ENCODE measurements at regions of chr2 and their contacts with region 1.

Region 1: DNA sequence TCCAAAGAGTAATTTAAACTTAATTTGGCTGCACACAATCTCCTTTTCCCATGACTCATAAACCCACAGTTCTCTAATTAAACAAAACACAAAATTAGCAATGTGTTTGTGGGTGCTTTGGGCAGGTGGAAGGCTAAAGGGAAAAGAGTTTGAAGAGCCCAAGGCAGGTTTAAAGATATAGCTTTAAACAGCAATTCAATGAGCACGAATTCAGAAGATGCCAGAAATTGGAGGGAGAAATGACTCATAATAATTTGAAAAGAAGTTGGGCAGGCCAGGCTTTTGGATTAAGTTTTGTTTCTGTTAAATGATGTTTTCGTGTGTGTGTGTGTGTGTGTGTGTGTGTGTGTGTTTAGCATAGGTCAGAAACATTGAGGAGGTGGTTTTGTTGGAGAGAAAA is 594.8 kb upstream of the ZEB2 start:
- DNase-seq: no peak
- H3K4me3 ChIP-seq: no peak overlapping the region
- CTCF ChIP-seq: no peak
- POLR2A ChIP-seq: no peak

Region 2: DNA sequence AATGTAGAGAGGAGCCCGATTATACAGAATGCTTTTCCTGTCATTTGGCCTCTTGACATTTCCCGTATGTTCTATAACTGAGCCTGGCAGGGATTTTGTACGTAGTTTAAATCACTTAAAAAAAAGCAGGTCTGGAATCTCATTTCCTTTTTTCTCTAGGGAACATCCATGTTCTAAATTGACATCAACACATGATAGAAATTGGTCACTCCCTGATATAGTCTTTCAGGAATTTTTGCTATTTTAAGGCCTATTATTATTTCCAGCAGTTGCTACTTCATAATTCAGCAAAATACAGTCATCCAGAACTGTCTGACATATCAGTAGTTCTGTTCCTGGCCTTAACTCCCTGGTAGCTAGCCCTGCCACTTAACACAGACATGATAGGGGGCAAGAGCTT is 29.1 kb before region 1 on chr2:
- intact Hi-C with region 1: loop called (anchors 1 kb)
- DNase-seq: no peak
- H3K4me3 ChIP-seq: no peak overlapping the region
- CTCF ChIP-seq: no peak
- POLR2A ChIP-seq: no peak

Measured in lower leg skin (tissue), 4 donors.